Activated CD4-positive, alpha-beta T cell treated with anti-CD3 and anti-CD28 coated beads for 36 hours (primary cell): ENCODE measurements at regions of chrX and their contacts with region 1.

Region 1: DNA sequence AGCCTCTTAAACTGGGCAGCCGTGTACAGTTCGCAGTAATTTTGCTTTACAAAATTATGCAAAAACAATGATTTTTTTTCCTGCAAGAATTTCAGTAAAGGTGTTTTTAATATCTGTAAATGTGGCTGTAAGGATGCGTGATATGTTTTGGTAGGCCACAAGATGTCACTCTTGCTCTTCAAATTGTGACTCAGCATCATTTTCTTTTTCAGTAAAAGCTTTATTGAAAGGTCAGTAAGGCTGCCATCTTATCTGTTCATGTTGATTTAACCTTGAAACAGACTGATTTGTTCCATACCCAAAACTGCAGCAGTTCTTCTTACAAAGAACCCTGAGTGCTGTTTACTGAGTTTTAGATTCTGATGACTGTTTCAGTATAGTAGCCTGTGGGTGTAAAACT is 39.9 kb downstream of the TXLNG start:
- DNase-seq: no peak
- ATAC-seq: peak; percentile 45
- H3K4me3 Mint-ChIP-seq: no peak overlapping the region
- H3K27ac Mint-ChIP-seq: peak overlapping the region; percentile 55
- H3K4me1 Mint-ChIP-seq: peaks cover 16% of the 10 kb centered on the region
- H3K27me3 Mint-ChIP-seq: no peaks in the 10 kb centered on the region

Region 2: DNA sequence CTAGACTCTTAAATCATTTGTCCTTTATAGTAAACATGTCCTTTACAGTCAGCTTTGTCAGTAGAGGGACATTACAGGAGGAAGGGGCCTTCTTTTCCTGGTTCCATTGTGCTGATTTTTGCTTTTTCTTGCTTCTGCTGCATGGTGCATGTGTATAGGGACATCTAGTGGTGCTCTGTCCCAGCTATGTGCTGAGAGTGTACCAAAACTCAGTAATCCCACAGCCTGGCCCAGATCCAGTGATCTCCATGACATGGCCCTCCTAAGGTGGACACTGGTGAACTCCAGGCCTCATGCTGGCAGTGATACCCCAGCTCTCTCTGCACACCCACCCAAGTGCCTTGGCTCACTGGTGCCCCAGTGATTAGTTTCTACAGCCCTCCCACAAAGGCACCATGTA is 613.8 kb before region 1 on chrX:
- CTCF ChIA-PET with region 1: no interaction called
- POLR2A ChIA-PET with region 1: no interaction called
- intact Hi-C with region 1: no loop called
- DNase-seq: no peak
- ATAC-seq: no peak
- H3K4me3 Mint-ChIP-seq: no peak overlapping the region
- H3K27ac Mint-ChIP-seq: no peak overlapping the region
- H3K4me1 Mint-ChIP-seq: no peaks in the 10 kb centered on the region
- H3K27me3 Mint-ChIP-seq: no peaks in the 10 kb centered on the region

Region 3: DNA sequence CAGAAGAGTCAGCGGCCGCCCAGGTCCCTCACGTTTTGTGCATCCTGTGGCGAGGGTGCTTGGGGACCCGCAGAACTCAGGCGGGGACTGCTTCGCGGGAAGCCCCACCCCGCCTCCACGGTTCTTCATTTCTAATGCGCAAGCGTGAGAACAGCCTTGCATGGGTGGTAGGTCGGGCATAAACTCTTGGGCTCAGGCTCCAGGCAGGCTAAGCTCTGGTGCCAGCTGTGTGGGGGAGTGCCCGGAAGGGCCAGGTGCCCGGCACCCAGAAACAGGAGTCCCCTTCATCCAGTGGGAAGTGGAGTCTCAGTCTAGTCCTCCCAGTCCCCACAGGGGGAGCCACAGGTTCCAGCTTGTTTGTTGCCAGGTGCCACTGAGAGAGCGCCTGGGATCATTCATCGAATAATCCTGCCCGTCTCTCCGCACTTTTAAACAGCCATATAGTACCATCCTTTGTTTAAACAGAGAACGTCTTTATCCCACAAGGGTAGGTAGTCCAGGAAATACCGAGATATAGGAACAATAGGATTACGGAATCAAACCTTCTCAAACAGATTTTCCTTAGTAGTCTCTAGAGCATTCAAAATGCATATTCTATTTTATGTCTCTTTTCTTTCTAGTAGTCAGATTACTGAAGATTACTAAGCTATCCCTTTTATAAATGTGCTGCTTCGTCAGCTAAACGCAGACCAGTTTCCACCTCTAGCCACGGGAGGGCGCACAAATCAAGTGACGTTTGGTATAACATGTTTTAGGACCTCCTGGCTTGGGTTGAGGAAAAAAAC is 56.7 kb after region 1 on chrX:
- CTCF ChIA-PET with region 1: interaction called, 12 read pairs
- POLR2A ChIA-PET with region 1: interaction called, 5 read pairs
- intact Hi-C with region 1: no loop called
- DNase-seq: peak; percentile 82
- ATAC-seq: peak; percentile 83
- H3K4me3 Mint-ChIP-seq: peak overlapping the region; percentile 69
- H3K27ac Mint-ChIP-seq: peak overlapping the region; percentile 86
- H3K4me1 Mint-ChIP-seq: no peaks in the 10 kb centered on the region
- H3K27me3 Mint-ChIP-seq: no peaks in the 10 kb centered on the region

Region 4: GRCh38 chrX:16892504-16893362 is 66.5 kb after region 1 on chrX:
- CTCF ChIA-PET with region 1: interaction called, 5 read pairs
- POLR2A ChIA-PET with region 1: no interaction called
- intact Hi-C with region 1: loop called (anchors 1 to 2 kb)
- DNase-seq: peak; percentile 71
- ATAC-seq: peak; percentile 71
- H3K4me3 Mint-ChIP-seq: no peak overlapping the region
- H3K27ac Mint-ChIP-seq: no peak overlapping the region
- H3K4me1 Mint-ChIP-seq: peaks cover 20% of the 10 kb centered on the region
- H3K27me3 Mint-ChIP-seq: peaks cover 5% of the 10 kb centered on the region

Region 5: DNA sequence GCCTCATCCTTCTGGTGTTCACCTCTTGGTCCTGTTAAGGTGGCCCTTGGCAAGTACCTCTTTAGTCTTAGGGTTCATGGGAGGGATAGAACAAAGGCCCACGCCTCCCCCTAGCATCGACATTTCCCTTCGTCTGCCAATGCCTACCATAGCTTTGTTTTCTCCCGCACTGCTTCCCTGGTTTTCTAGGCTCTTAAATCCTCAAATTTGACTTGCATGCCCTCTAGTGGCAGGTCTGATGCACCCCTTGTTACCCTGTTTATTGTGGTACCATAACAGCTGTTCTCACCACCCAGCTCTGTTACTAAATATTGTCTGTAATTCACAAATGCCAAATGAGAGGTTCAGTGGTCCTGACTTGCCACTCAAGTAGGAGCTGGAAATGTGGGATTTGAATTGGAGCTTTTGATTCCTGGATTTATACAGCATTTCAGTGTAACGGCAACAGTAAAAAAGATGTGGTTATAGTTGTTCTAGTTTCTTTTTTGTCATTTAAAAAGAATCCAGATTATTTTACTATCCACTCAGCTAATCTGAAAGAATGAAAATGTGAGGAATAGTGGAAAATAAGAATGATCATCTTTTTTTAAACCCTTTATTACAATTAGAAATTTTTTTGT is 220.4 kb after region 1 on chrX:
- CTCF ChIA-PET with region 1: interaction called, 21 read pairs
- POLR2A ChIA-PET with region 1: no interaction called
- intact Hi-C with region 1: loop called (anchors 1 kb)
- DNase-seq: peak; percentile 60
- ATAC-seq: peak; percentile 57
- H3K4me3 Mint-ChIP-seq: no peak overlapping the region
- H3K27ac Mint-ChIP-seq: no peak overlapping the region
- H3K4me1 Mint-ChIP-seq: peaks cover 2% of the 10 kb centered on the region
- H3K27me3 Mint-ChIP-seq: no peaks in the 10 kb centered on the region